ENCODE measurements at regions of chr1 and their contacts with region 1.

Region 1: GRCh38 chr1:16206547-16207317 is 5.7 kb downstream of the ARHGEF19 start:
- DNase-seq: peak; percentile 98
- H3K4me3 ChIP-seq: peak overlapping the region; percentile 54 to 67 (median 62)
- H3K27ac ChIP-seq: peak overlapping the region; percentile 80 to 96 (median 92)
- H3K4me1 ChIP-seq: peaks cover 10 to 28% (median 23%) of the 10 kb centered on the region in 4 donors
- H3K27me3 ChIP-seq: no peaks in the 10 kb centered on the region
- CTCF ChIP-seq: no peak
- EP300 ChIP-seq: no peak
- POLR2A ChIP-seq: peak; percentile 26

Region 2: GRCh38 chr1:16334655-16335340 is 128.1 kb after region 1 on chr1:
- intact Hi-C with region 1: no loop called
- DNase-seq: no peak
- H3K4me3 ChIP-seq: no peak overlapping the region
- H3K27ac ChIP-seq: no peak overlapping the region
- H3K4me1 ChIP-seq: peaks cover 9 to 39% (median 23%) of the 10 kb centered on the region in 4 donors
- H3K27me3 ChIP-seq: no peaks in the 10 kb centered on the region
- CTCF ChIP-seq: no peak
- EP300 ChIP-seq: no peak
- POLR2A ChIP-seq: no peak

Region 3: GRCh38 chr1:16366722-16367257 is 160.1 kb after region 1 on chr1 and contains the start of gene SZRD1:
- intact Hi-C with region 1: loop called (anchors 5 kb)
- DNase-seq: peak; percentile 99
- H3K4me3 ChIP-seq: peak within 1 kb of the TSS; percentile 74 to 97 (median 84)
- H3K27ac ChIP-seq: peak within 1 kb of the TSS; percentile 97 to 98 (median 98)
- H3K4me1 ChIP-seq: peaks cover 40 to 69% (median 69%) of the 10 kb centered on the region in 4 donors
- H3K27me3 ChIP-seq: no peaks in the 10 kb centered on the region
- CTCF ChIP-seq: peak in 1 of 3 experiments; percentile 5
- EP300 ChIP-seq: no peak
- POLR2A ChIP-seq: no peak
- total RNA-seq, gene SZRD1: 70.2 to 110 (median 98.3) TPM

Measured in esophagus muscularis mucosa (tissue), 4 donors.